H1 (cell line): ENCODE measurements at regions of chr4 and their contacts with region 1.

Region 1: GRCh38 chr4:88446124-88446523 is 10.8 kb upstream of the HERC5 start:
- DNase-seq: no peak
- H3K4me3 ChIP-seq: no peak overlapping the region
- H3K27ac ChIP-seq: no peak overlapping the region
- H3K4me1 ChIP-seq: peaks cover 0 to 5% (median 4%) of the 10 kb centered on the region in 4 experiments; a peak in 4 of 7 replicates
- H3K27me3 ChIP-seq: no peaks in the 10 kb centered on the region
- CTCF ChIP-seq: no peak
- EP300 ChIP-seq: no peak
- POLR2A ChIP-seq: no peak
- RAD21 ChIP-seq: no peak

Region 2: GRCh38 chr4:88456757-88457306 is 10.7 kb after region 1 on chr4 and contains the start of gene HERC5:
- CTCF ChIA-PET with region 1: interaction called, 17 read pairs
- POLR2A ChIA-PET with region 1: interaction called, 6 read pairs
- DNase-seq: peak; percentile 87 to 90
- H3K4me3 ChIP-seq: peak within 1 kb of the TSS; percentile 47 to 76 (median 62)
- H3K27ac ChIP-seq: no peak within 1 kb of the TSS
- H3K4me1 ChIP-seq: peaks cover 0 to 8% (median 3%) of the 10 kb centered on the region in 4 experiments; a peak in 3 of 7 replicates
- H3K27me3 ChIP-seq: peaks cover 0 to 14% (median 7%) of the 10 kb centered on the region in 4 experiments; a peak in 5 of 7 replicates
- CTCF ChIP-seq: peak; percentile 67 to 81 (median 78)
- EP300 ChIP-seq: no peak
- POLR2A ChIP-seq: no peak
- RAD21 ChIP-seq: peak; percentile 75 to 78
- total RNA-seq, gene HERC5: 20.2 and 20.7 TPM in 2 replicates